ENCODE measurements at regions of chr10 and their contacts with region 1.

Region 1: DNA sequence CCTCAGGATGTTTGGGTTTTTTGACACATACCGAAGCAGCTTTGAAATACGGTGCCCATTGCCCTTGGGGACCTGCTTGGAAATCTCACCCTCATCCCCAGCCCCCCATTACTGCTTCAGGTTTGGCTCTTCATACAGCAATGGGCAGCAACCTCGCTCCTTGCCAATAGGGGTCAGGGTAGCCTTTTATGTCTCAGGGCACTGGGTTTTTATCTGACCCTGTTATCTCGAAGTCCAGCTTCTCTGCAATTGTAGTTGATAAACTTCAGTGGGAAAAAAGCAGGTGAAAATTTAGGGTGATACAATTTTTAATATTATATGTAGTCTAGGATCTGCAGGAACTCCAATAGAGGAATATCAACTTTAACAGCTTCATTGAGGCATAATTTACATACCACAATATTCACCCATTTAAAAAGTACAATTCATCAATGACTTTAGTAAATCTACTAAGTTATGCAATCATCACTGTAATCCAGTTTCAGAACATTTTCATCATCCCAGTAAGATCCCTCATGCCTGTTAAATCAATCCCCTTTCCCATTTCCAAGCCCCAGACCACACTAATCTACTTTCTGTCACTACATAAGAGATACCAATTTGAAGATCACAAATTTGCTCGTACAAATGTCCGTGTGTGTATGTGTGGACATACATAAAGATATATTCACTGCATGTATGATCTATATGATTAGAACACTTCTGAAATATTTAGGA is 386.2 kb downstream of the KCNMA1 start:
- DNase-seq: peak; percentile 92
- ATAC-seq: peak; percentile 72
- H3K4me3 ChIP-seq: no peak overlapping the region
- H3K27ac ChIP-seq: no peak overlapping the region
- H3K4me1 ChIP-seq: peaks cover 20% of the 10 kb centered on the region
- H3K27me3 ChIP-seq: no peaks in the 10 kb centered on the region
- CTCF ChIP-seq: peak; percentile 100

Region 2: GRCh38 chr10:77173615-77174461 is 77.6 kb before region 1 on chr10:
- CTCF ChIA-PET with region 1: interaction called, 20 read pairs
- POLR2A ChIA-PET with region 1: interaction called, 9 read pairs
- intact Hi-C with region 1: loop called (anchors 1 kb)
- DNase-seq: peak; percentile 100
- ATAC-seq: peak; percentile 78
- H3K4me3 ChIP-seq: no peak overlapping the region
- H3K27ac ChIP-seq: no peak overlapping the region
- H3K4me1 ChIP-seq: peaks cover 16% of the 10 kb centered on the region
- H3K27me3 ChIP-seq: no peaks in the 10 kb centered on the region
- CTCF ChIP-seq: peak; percentile 100

Region 3: DNA sequence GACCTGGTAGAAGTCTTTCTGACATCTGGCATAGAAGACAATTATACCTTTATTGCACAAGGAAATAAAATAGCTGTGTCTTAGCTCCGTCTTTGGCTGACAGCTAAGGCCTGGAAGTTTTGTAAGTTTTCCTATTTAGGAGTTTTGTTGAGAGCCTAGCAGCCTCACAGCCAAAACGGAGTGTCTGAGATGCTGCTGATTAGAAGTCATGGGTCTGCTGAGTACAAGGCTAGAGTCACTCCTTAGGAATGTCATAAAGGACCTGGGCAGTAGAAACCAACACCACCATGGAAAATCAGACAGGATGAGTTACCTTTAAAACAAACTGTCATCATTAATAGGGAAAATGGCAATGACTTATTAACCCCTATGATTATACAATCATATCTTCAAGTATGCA is 56.4 kb before region 1 on chr10:
- CTCF ChIA-PET with region 1: no interaction called
- POLR2A ChIA-PET with region 1: no interaction called
- intact Hi-C with region 1: no loop called
- DNase-seq: peak; percentile 100
- ATAC-seq: peak; percentile 99
- H3K4me3 ChIP-seq: 0 out of 2 replicates have a peak overlapping the region, but pooled peaks have one; percentile 0
- H3K27ac ChIP-seq: peak overlapping the region; percentile 41
- H3K4me1 ChIP-seq: peaks cover 46% of the 10 kb centered on the region
- H3K27me3 ChIP-seq: no peaks in the 10 kb centered on the region
- CTCF ChIP-seq: no peak

Region 4: GRCh38 chr10:77350711-77351119 is 99.3 kb after region 1 on chr10:
- CTCF ChIA-PET with region 1: interaction called, 3 read pairs
- POLR2A ChIA-PET with region 1: no interaction called
- intact Hi-C with region 1: loop called (anchors 1 kb)
- DNase-seq: peak; percentile 100
- ATAC-seq: peak; percentile 96
- H3K4me3 ChIP-seq: 0 out of 2 replicates have a peak overlapping the region, but pooled peaks have one; percentile 0
- H3K27ac ChIP-seq: peak overlapping the region; percentile 77
- H3K4me1 ChIP-seq: peaks cover 52% of the 10 kb centered on the region
- H3K27me3 ChIP-seq: no peaks in the 10 kb centered on the region
- CTCF ChIP-seq: 0 out of 2 replicates have a peak, but pooled peaks have one; percentile 18

Region 5: DNA sequence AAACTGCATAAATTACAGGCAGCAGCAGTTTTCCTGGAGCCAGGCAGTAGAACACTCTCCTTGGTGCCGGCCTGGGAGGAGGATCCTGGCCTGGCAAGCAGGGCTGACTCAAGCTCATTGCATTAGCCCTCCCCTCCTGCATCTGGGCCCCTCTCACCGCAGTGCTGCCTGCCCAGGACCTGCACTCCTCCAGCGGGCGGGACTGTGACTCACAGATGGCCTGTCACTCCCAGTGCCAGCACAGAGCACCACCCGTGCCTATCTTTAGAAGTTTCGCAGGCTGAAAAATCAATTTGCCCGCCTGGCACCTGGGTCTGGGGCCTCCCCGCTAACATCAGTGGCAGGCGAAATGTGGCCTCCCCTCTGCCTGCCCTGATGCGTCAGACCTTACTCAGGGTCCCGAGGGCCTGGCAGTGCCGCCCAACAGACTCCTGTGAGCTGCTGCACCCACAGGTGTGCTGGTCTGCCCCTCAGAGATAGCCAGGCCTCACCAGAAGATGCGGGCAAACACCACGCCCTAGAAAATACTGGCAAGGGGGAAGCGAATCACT is 262.4 kb after region 1 on chr10:
- CTCF ChIA-PET with region 1: interaction called, 5 read pairs
- POLR2A ChIA-PET with region 1: no interaction called
- intact Hi-C with region 1: loop called (anchors 5 kb)
- DNase-seq: peak; percentile 100
- ATAC-seq: peak; percentile 91
- H3K4me3 ChIP-seq: peak overlapping the region; percentile 49
- H3K27ac ChIP-seq: peak overlapping the region; percentile 82
- H3K4me1 ChIP-seq: peaks cover 69% of the 10 kb centered on the region
- H3K27me3 ChIP-seq: no peaks in the 10 kb centered on the region
- CTCF ChIP-seq: no peak

Region 6: GRCh38 chr10:77710759-77711682 is 459.6 kb after region 1 on chr10:
- CTCF ChIA-PET with region 1: interaction called, 3 read pairs
- POLR2A ChIA-PET with region 1: no interaction called
- intact Hi-C with region 1: loop called (anchors 5 kb)
- DNase-seq: peak; percentile 97
- ATAC-seq: peak; percentile 98
- H3K4me3 ChIP-seq: peak overlapping the region; percentile 57
- H3K27ac ChIP-seq: no peak overlapping the region
- H3K4me1 ChIP-seq: peaks cover 10% of the 10 kb centered on the region; the same call in 1 of the 2 replicates
- H3K27me3 ChIP-seq: no peaks in the 10 kb centered on the region
- CTCF ChIP-seq: peak; percentile 100

Measured in PC-3 (cell line).